IMR-90 (cell line): ENCODE measurements at regions of chrX and their contacts with region 1.

Region 1: DNA sequence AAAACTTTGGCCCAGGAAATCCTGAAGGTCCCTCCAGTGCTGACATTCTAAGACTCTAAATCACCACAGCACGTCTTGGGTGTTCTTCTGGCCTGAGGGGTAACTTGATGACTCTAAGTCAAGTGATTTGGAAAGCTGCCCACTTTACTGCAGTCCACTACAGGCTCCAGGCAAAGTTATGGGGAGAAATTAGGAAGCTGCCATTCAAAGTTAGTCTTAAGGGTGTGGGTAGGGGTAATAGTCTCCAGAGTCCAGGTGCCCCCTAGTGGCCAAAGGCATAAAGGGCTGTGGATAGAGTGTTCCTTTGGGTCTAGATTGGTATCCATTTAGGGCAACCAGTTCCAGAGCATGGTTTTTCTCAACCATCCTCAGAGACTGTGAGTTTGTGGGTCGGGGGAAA is 38.7 kb upstream of the SLC16A2 start:
- DNase-seq: peak; percentile 66
- ATAC-seq: peak; percentile 89
- H3K4me3 ChIP-seq: no peak overlapping the region
- H3K27ac ChIP-seq: no peak overlapping the region
- H3K4me1 ChIP-seq: no peaks in the 10 kb centered on the region
- H3K27me3 ChIP-seq: peaks cover 3% of the 10 kb centered on the region
- CTCF ChIP-seq: peak; percentile 68
- POLR2A ChIP-seq: no peak
- RAD21 ChIP-seq: peak; percentile 59

Region 2: DNA sequence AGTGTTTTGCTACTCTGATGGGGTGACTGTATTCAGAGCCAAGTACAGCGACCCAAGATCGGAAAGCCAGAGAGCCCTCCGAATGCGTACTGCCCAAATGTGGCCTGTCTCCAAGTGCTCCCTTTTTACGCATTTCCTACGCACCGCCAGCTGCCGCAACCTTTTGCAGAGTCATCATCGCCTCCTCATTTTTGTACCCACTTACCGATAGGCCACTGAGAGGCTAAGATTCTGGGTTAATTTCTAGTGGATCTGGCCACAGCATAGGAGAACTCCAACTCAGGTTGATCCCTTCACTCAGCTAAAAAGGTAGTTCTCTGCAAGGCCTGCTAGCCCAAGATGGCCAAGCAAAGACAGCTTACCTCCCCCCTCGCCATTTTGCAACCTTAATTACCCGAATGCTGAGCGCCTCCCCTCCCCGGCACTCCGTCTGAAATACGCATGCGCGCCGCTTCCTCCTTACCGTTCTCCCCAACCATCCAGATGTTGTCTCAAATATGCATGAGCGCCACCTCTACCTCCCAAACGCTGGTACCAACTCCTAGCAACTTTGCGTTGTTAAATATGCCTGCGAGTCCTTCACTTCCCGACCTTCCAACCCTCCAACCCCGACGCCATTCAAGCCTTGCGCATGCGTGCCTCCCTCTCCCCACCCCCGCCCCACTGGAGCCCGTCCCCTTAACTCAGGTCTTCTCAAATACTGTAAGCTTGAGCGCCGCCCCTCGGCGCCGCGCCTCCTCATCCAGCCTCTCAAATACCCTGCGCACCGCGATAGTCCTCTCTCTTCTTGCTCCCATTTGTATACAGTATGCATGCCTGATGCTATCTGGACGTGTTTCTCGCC is 90.4 kb before region 1 on chrX:
- CTCF ChIA-PET with region 1: no interaction called
- POLR2A ChIA-PET with region 1: no interaction called
- dilution Hi-C with region 1: no loop called
- in situ Hi-C with region 1: no loop called
- intact Hi-C with region 1: loop called (anchors 2 kb)
- DNase-seq: peak; percentile 87
- ATAC-seq: peak; percentile 94
- H3K4me3 ChIP-seq: peak overlapping the region; percentile 89
- H3K27ac ChIP-seq: peak overlapping the region; percentile 98
- H3K4me1 ChIP-seq: no peaks in the 10 kb centered on the region
- H3K27me3 ChIP-seq: no peaks in the 10 kb centered on the region
- CTCF ChIP-seq: 0 out of 2 replicates have a peak, but pooled peaks have one; percentile 28
- POLR2A ChIP-seq: peak; percentile 87
- RAD21 ChIP-seq: peak; percentile 15; the same call in 1 of the 2 replicates

Region 3: GRCh38 chrX:74325130-74326059 is 57.2 kb before region 1 on chrX:
- CTCF ChIA-PET with region 1: no interaction called
- POLR2A ChIA-PET with region 1: no interaction called
- dilution Hi-C with region 1: no loop called
- in situ Hi-C with region 1: no loop called
- intact Hi-C with region 1: no loop called
- DNase-seq: no peak
- ATAC-seq: no peak
- H3K4me3 ChIP-seq: no peak overlapping the region
- H3K27ac ChIP-seq: no peak overlapping the region
- H3K4me1 ChIP-seq: no peaks in the 10 kb centered on the region
- H3K27me3 ChIP-seq: peaks cover 26% of the 10 kb centered on the region
- CTCF ChIP-seq: no peak
- POLR2A ChIP-seq: no peak
- RAD21 ChIP-seq: no peak

Region 4: GRCh38 chrX:74450803-74451449 is 68.3 kb after region 1 on chrX:
- CTCF ChIA-PET with region 1: no interaction called
- POLR2A ChIA-PET with region 1: no interaction called
- dilution Hi-C with region 1: no loop called
- in situ Hi-C with region 1: no loop called
- intact Hi-C with region 1: loop called (anchors 1 kb)
- DNase-seq: peak; percentile 94
- ATAC-seq: peak; percentile 91
- H3K4me3 ChIP-seq: no peak overlapping the region
- H3K27ac ChIP-seq: peak overlapping the region; percentile 79
- H3K4me1 ChIP-seq: peaks cover 6% of the 10 kb centered on the region
- H3K27me3 ChIP-seq: peaks cover 2% of the 10 kb centered on the region; the same call in 1 of the 2 replicates
- CTCF ChIP-seq: no peak
- POLR2A ChIP-seq: no peak
- RAD21 ChIP-seq: no peak

Region 5: DNA sequence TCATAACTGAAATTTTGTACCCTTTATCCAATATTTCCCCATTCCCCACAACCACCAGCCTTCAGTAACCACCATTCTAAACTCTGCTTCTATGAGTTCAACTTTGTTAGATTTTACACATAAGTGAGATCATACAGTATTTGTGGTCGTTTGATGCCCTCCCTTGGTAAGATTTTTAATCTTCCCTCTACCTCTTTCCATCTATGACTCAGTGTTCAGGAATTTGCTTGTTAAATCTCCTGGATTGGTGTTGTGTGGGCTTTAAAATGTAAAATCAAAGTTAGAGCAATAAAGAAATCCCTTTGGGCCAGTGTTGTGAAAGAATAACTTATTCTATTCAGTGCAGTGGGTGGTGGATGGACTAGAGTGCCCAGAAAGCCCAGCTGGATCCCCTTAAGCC is 76.1 kb after region 1 on chrX:
- CTCF ChIA-PET with region 1: no interaction called
- POLR2A ChIA-PET with region 1: no interaction called
- dilution Hi-C with region 1: no loop called
- in situ Hi-C with region 1: no loop called
- intact Hi-C with region 1: loop called (anchors 2 kb)
- DNase-seq: peak; percentile 77
- ATAC-seq: peak; percentile 74
- H3K4me3 ChIP-seq: no peak overlapping the region
- H3K27ac ChIP-seq: no peak overlapping the region
- H3K4me1 ChIP-seq: no peaks in the 10 kb centered on the region
- H3K27me3 ChIP-seq: no peaks in the 10 kb centered on the region; the same call in 1 of the 2 replicates
- CTCF ChIP-seq: peak; percentile 47
- POLR2A ChIP-seq: no peak
- RAD21 ChIP-seq: peak; percentile 51

Region 6: DNA sequence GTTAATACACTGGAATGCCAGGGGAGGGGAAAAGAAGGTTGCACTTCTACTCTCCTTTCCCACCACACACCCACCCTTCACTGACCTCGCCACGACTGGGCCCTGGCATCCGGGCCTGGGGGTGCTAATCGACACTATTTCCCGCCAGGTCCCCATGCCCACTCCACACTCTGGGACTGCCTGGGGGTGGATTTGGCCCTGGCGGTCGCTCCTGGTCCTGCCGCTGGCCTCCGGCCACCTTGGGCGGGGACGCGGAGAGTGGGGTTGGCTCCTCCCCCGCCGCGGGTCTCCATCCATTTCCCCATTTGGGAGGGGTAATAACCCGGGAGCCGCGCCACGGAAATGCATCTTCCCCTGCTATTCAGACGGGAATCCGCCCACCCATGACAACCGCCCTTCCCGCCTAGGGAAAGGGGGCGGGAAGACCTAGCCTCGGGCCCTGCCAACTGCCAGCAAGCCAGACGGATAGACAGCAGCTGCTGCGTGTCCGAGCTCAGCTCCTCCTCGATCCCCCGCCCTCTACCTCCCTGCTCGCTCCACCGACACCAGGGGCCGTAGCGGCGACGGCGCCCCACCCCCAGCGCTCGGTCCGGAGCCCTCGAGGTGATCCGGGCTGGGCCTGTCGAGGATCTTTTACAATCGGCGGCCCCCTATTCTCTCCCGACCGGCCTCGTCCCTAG is 153.7 kb after region 1 on chrX:
- CTCF ChIA-PET with region 1: interaction called, 4 read pairs
- POLR2A ChIA-PET with region 1: no interaction called
- dilution Hi-C with region 1: no loop called
- in situ Hi-C with region 1: no loop called
- intact Hi-C with region 1: loop called (anchors 1 kb)
- DNase-seq: peak; percentile 83
- ATAC-seq: peak; percentile 73
- H3K4me3 ChIP-seq: peak overlapping the region; percentile 38
- H3K27ac ChIP-seq: peak overlapping the region; percentile 83
- H3K4me1 ChIP-seq: peaks cover 6% of the 10 kb centered on the region; the same call in 1 of the 2 replicates
- H3K27me3 ChIP-seq: no peaks in the 10 kb centered on the region
- CTCF ChIP-seq: peak; percentile 37
- POLR2A ChIP-seq: 0 out of 2 replicates have a peak, but pooled peaks have one; percentile 16
- RAD21 ChIP-seq: no peak

Region 7: GRCh38 chrX:74550295-74550802 is 167.7 kb after region 1 on chrX:
- CTCF ChIA-PET with region 1: no interaction called
- POLR2A ChIA-PET with region 1: no interaction called
- dilution Hi-C with region 1: no loop called
- in situ Hi-C with region 1: loop called (anchors 5 kb)
- intact Hi-C with region 1: loop called (anchors 1 kb)
- DNase-seq: peak; percentile 67
- ATAC-seq: peak; percentile 97
- H3K4me3 ChIP-seq: peak overlapping the region; percentile 38; the same call in 1 of the 2 replicates
- H3K27ac ChIP-seq: no peak overlapping the region
- H3K4me1 ChIP-seq: no peaks in the 10 kb centered on the region
- H3K27me3 ChIP-seq: no peaks in the 10 kb centered on the region; the same call in 1 of the 2 replicates
- CTCF ChIP-seq: peak; percentile 99
- POLR2A ChIP-seq: no peak
- RAD21 ChIP-seq: peak; percentile 95